Dorsolateral prefrontal cortex (tissue), 120 donors: ENCODE measurements at regions of chr2 and their contacts with region 1.

Region 1: DNA sequence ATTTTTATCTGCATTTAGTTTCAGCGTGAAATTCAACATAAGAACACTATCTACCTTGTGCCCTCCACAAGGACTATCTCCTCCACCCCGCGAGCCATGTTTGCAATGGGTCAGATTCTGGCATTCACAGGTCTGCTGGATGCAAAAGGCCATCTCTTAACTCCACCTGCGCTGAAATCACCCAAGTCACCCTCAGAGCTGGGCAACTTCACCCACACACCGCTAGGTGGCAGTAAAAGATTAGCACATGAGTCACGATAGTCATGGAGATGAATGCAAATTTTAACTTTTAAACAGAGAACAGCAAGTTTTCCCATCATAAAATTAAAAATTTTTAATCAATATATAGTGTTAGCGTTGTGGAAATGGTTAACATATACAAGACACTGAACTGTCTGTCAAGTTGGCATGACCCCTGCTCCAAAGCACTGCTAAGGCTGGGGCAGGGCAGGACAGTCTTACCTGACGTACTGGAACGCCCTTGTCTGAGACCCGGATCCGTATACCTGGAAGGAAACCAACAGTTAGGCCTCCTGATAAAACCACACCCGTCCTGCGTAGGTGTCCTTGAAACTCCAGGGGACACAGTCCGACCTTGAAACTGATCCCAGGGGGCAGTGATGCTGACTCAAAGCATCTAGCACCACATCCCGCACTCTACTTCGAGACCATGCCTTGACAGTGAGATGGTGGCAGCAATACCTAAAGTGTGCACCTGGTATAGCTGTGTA is 89.6 kb downstream of the UXS1 start:
- DNase-seq: peak in 5 of 10 donors; percentile 63 to 72 (median 69)
- H3K4me3 ChIP-seq: no peak overlapping the region
- H3K27ac ChIP-seq: no peak overlapping the region
- H3K27me3 ChIP-seq: no peaks in the 10 kb centered on the region
- CTCF ChIP-seq: peak; percentile 76 to 100 (median 97)

Region 2: GRCh38 chr2:106542811-106543259 is 438.3 kb after region 1 on chr2:
- intact Hi-C with region 1: loop called (anchors 2 to 10 kb)
- DNase-seq: peak in 9 of 10 donors; percentile 31 to 75 (median 59)
- H3K4me3 ChIP-seq: peak overlapping the region in 46 of 59 donors; percentile 7 to 58 (median 35)
- H3K27ac ChIP-seq: no peak overlapping the region
- H3K27me3 ChIP-seq: peaks cover 0 to 16% (median 0%) of the 10 kb centered on the region in 45 donors
- CTCF ChIP-seq: peak; percentile 71 to 97 (median 90)

Region 3: DNA sequence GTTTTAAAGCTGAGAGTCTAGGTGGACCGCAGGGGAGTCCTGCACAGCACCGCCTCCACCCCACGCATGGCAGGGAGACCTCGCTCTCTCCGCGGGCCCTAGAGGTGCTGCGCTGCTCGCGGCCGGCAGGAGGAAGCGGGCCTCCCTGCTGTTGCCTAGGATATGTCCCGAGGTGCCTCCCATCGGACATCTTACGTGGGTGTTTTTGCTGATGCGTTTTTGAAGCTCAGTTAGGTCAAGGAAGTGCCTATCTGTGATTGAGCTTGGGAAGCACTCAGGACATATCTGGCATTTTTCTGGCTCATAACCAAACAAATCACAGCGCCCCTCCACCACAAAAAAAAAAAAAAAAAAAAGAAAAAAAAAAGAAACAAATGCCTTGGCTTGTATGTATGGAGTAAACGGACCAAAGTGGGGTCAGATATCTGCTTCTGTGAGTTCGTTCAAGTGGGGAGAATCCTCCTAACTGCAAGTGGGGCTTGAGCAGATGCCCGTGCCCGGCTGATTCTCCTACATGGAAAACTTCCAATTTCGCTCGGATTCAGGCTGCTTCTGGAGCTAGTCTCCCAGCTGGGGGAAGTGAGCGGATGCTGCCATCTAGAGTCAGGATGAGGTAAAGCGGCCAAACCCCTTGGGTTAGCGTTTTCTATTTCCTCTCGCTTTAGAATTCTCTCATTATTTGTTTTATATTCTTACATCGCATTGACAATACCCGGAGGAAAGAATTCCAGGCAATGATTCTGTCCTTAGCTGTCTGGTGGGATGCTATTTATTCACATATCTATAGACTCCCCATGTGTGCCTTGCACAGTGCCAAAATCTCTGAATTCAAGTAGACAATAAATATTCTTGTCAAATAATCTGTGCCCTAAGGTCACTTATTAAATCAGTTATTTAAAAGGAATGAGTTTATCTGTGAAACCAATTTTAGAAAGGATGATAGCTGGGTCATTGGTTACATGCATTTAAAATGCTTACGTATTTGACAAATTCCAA is 477.9 kb after region 1 on chr2:
- intact Hi-C with region 1: loop called (anchors 1 to 5 kb)
- DNase-seq: peak; percentile 62 to 84 (median 78)
- H3K4me3 ChIP-seq: peak overlapping the region; percentile 22 to 68 (median 52)
- H3K27ac ChIP-seq: peak overlapping the region in 2 of 59 donors; percentile 31 to 47
- H3K27me3 ChIP-seq: peaks cover 0 to 33% (median 8%) of the 10 kb centered on the region in 45 donors
- CTCF ChIP-seq: peak; percentile 63 to 97 (median 89)